Heart right ventricle (tissue), 16 donors: ENCODE measurements at regions of chr22 and their contacts with region 1.

Region 1: DNA sequence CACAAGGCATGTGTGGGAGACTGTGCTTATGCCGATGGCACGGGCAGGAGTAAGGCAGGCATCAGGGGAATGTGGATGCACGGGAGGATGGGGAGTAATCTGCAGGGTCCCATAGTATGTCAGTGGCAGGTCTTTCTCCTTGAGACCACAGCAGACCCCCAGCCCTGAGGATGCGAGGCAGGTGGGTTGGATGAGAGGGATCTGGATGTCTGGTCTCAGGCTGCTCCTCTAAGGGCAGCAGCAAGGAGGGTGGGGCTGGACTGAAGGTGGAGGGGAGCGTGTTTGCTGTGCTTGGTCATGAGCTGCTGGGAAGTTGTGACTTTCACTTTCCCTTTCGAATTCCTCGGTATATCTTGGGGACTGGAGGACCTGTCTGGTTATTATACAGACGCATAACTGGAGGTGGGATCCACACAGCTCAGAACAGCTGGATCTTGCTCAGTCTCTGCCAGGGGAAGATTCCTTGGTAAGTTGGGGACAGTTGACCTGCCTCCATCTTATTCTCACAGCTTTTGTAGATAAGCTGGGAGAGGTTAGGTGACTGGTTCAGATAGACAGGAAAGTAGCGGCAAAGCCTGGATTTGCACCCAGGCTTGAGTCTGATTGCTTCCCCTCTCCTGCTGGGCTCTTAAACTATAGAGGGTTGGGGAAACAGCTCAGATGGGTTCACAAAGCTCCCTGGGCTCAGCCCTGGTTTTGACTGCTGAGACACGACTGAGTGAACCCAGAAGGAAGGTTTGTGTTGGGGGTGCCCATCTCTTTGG is at the start of gene APOL1:
- DNase-seq: peak in 1 of 2 donors; percentile 66
- ATAC-seq: peak; percentile 45 to 77 (median 68)
- H3K4me3 ChIP-seq: peak within 1 kb of the TSS; percentile 16 to 65 (median 58)
- H3K27ac ChIP-seq: peak within 1 kb of the TSS; percentile 62 to 92 (median 90)
- H3K4me1 ChIP-seq: peaks cover 4 to 53% (median 36%) of the 10 kb centered on the region in 9 donors
- H3K27me3 ChIP-seq: no peaks in the 10 kb centered on the region
- CTCF ChIP-seq: no peak
- total RNA-seq, gene APOL1: 9.8 to 121 (median 16.4) TPM

Region 2: GRCh38 chr22:36201630-36202319 is 51.2 kb before region 1 on chr22 and contains the start of gene APOL4:
- intact Hi-C with region 1: loop called in 2 of 10 experiments (anchors 5 to 10 kb)
- DNase-seq: peak; percentile 81 to 92
- ATAC-seq: peak; percentile 75 to 95 (median 88)
- H3K4me3 ChIP-seq: peak within 1 kb of the TSS in 8 of 10 donors; percentile 15 to 60 (median 41)
- H3K27ac ChIP-seq: peak within 1 kb of the TSS; percentile 49 to 92 (median 70)
- H3K4me1 ChIP-seq: peaks cover 7 to 59% (median 43%) of the 10 kb centered on the region in 9 donors
- H3K27me3 ChIP-seq: no peaks in the 10 kb centered on the region
- CTCF ChIP-seq: peak in 2 of 9 donors; percentile 10 to 34
- total RNA-seq, gene APOL4: 1.6 to 22.6 (median 4.9) TPM in 9 of 10 donors, not detected in the other